Mammary epithelial cell (primary cell): ENCODE measurements at regions of chr2 and their contacts with region 1.

Region 1: GRCh38 chr2:27622921-27623384 is 5.9 kb downstream of the CCDC121 start:
- DNase-seq: peak; percentile 33
- H3K4me3 ChIP-seq: no peak overlapping the region
- H3K27ac ChIP-seq: no peak overlapping the region
- H3K4me1 ChIP-seq: peaks cover 25% of the 10 kb centered on the region
- H3K27me3 ChIP-seq: no peaks in the 10 kb centered on the region
- CTCF ChIP-seq: no peak

Region 2: GRCh38 chr2:27123302-27124231 is 499.4 kb before region 1 on chr2 and contains the start of gene ABHD1:
- CTCF ChIA-PET with region 1: no interaction called
- dilution Hi-C with region 1: no loop called
- in situ Hi-C with region 1: no loop called
- intact Hi-C with region 1: no loop called
- DNase-seq: no peak
- H3K4me3 ChIP-seq: peak within 1 kb of the TSS; percentile 29 to 58 (median 52)
- H3K27ac ChIP-seq: no peak within 1 kb of the TSS
- H3K4me1 ChIP-seq: peaks cover 10% of the 10 kb centered on the region
- H3K27me3 ChIP-seq: peaks cover 3% of the 10 kb centered on the region
- CTCF ChIP-seq: no peak
- total RNA-seq, gene ABHD1: 0.17 TPM in 1 of 2 donors, not detected in the other

Region 3: DNA sequence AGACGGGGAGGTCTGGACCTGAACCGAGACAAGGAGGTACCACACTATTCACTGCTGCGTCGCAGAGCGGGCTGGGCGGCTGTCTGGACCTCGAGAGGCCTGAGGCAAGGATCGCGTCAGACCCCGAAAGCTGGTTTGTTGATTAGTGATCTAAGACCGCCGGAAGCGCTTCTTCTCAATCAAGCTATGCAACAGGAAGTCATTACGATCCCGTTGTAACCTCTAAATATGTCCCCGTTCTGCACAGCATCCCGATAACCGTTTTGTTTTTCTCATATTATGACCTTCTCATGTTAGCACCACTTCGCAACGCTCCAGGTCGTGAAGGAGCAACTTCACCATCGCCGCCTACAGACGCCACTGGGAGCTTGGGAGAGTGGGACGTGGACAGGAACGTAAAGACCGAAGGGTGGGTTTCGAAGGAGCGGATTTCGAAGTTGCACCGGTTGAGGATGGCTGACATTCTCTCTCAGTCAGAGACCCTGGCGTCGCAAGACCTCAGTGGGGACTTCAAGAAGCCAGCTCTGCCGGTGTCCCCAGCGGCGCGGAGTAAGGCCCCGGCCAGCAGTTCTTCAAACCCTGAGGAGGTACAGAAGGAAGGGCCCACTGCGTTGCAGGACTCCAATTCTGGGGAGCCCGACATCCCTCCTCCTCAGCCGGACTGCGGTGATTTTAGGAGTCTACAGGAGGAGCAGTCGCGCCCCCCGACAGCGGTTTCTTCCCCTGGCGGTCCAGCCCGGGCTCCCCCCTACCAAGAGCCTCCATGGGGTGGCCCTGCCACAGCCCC is 40.7 kb after region 1 on chr2 and contains the starts of genes SLC4A1AP and SUPT7L:
- CTCF ChIA-PET with region 1: no interaction called
- dilution Hi-C with region 1: loop called (anchors 5 kb)
- in situ Hi-C with region 1: no loop called
- intact Hi-C with region 1: no loop called
- DNase-seq: peak; percentile 85
- H3K4me3 ChIP-seq: peak within 1 kb of the TSS; percentile 70 to 82 (median 77)
- H3K27ac ChIP-seq: peak within 1 kb of the TSS; percentile 87
- H3K4me1 ChIP-seq: peaks cover 20% of the 10 kb centered on the region
- H3K27me3 ChIP-seq: no peaks in the 10 kb centered on the region
- CTCF ChIP-seq: peak in 1 of 2 donors; percentile 17
- total RNA-seq, gene SLC4A1AP: 23.8 to 26.1 TPM
- total RNA-seq, gene SUPT7L: 31.2 to 46.2 TPM